ENCODE measurements at regions of chr18 and their contacts with region 1.

Region 1: DNA sequence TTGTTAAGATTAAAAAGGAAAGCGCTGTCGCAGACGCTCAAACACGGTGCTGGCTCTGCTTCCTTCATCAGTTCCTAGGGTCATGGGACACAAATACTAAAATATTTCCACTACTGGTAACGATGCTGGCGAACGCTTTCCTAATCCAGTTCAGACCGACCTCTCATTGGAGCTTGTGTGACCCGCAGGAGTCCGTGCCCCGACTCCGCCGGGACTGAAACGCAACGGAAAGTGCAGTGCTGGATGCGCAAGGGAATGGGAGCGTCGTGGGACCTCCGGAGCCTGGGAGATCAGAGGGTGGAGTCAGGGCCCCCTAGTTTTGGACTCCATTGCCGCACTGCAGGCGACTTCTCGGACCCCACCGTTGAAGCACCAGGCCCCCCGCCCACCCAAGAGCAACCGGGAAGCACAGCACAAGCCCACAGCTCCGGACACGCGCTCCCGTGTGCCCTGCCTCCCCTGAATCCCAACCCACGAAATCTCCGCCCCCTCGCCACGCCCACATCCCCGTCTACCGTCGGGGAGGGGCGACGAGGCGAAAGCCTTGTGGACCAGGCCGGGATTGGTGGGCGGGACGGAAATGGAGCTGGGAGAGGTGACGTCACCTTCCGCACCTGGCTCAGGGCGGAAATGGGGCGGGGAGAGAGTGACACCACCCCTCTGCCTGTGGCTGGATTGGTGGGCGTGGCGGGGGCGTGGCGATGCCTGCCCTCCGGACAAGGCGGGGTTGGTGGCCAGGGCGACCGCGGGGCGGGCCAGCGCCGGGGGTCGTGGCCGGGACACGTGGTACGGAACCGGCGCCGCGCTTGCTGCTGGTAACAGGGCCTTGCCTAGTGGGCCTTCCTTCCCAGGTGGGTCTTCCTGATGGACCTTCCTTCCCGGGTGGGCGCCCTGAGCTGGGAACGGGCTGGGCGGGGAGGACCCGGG is at the start of gene CNDP2:
- DNase-seq: peak; percentile 99
- ATAC-seq: peak; percentile 79
- H3K4me3 ChIP-seq: peak within 1 kb of the TSS; percentile 19 to 95 (median 81)
- H3K4me3 Mint-ChIP-seq: peak within 1 kb of the TSS; percentile 95
- H3K27ac ChIP-seq: peak within 1 kb of the TSS; percentile 85 to 91
- H3K27ac Mint-ChIP-seq: peak within 1 kb of the TSS; percentile 94
- H3K4me1 ChIP-seq: peaks cover 38% of the 10 kb centered on the region in 2 donors
- H3K4me1 Mint-ChIP-seq: peaks cover 43% of the 10 kb centered on the region
- H3K27me3 ChIP-seq: no peaks in the 10 kb centered on the region
- H3K27me3 Mint-ChIP-seq: no peaks in the 10 kb centered on the region
- CTCF ChIP-seq: no peak
- total RNA-seq, gene CNDP2: 182 and 196 TPM in 2 replicates

Region 2: GRCh38 chr18:74147779-74148542 is 347.9 kb before region 1 on chr18 and contains the starts of genes FBXO15 and TIMM21:
- CTCF ChIA-PET with region 1: no interaction called
- POLR2A ChIA-PET with region 1: no interaction called
- intact Hi-C with region 1: loop called (anchors 1 kb)
- DNase-seq: peak; percentile 98
- ATAC-seq: peak; percentile 84
- H3K4me3 ChIP-seq: peak within 1 kb of the TSS; percentile 75 to 99 (median 89)
- H3K4me3 Mint-ChIP-seq: peak within 1 kb of the TSS; percentile 94
- H3K27ac ChIP-seq: peak within 1 kb of the TSS; percentile 95 to 99
- H3K27ac Mint-ChIP-seq: peak within 1 kb of the TSS; percentile 100
- H3K4me1 ChIP-seq: peaks cover 15 to 21% of the 10 kb centered on the region in 2 donors
- H3K4me1 Mint-ChIP-seq: peaks cover 36% of the 10 kb centered on the region
- H3K27me3 ChIP-seq: no peaks in the 10 kb centered on the region
- H3K27me3 Mint-ChIP-seq: peaks cover 7% of the 10 kb centered on the region
- CTCF ChIP-seq: peak; percentile 1
- total RNA-seq, gene FBXO15: 3.7 and 4.1 TPM in 2 replicates
- total RNA-seq, gene TIMM21: 24.3 and 25.0 TPM in 2 replicates

Region 3: GRCh38 chr18:74353169-74353775 is 142.6 kb before region 1 on chr18:
- CTCF ChIA-PET with region 1: interaction called, 75 read pairs
- POLR2A ChIA-PET with region 1: interaction called, 9 read pairs
- intact Hi-C with region 1: loop called (anchors 1 kb)
- DNase-seq: peak; percentile 63
- ATAC-seq: peak; percentile 49
- H3K4me3 ChIP-seq: no peak overlapping the region
- H3K4me3 Mint-ChIP-seq: no peak overlapping the region
- H3K27ac ChIP-seq: no peak overlapping the region
- H3K27ac Mint-ChIP-seq: no peak overlapping the region
- H3K4me1 ChIP-seq: peaks cover 4 to 8% of the 10 kb centered on the region in 2 donors
- H3K4me1 Mint-ChIP-seq: peaks cover 11% of the 10 kb centered on the region
- H3K27me3 ChIP-seq: no peaks in the 10 kb centered on the region
- H3K27me3 Mint-ChIP-seq: no peaks in the 10 kb centered on the region
- CTCF ChIP-seq: peak; percentile 53

Region 4: GRCh38 chr18:74430811-74431571 is 64.9 kb before region 1 on chr18:
- CTCF ChIA-PET with region 1: no interaction called
- POLR2A ChIA-PET with region 1: no interaction called
- intact Hi-C with region 1: no loop called
- DNase-seq: no peak
- ATAC-seq: no peak
- H3K4me3 ChIP-seq: no peak overlapping the region
- H3K4me3 Mint-ChIP-seq: no peak overlapping the region
- H3K27ac ChIP-seq: no peak overlapping the region
- H3K27ac Mint-ChIP-seq: no peak overlapping the region
- H3K4me1 ChIP-seq: no peaks in the 10 kb centered on the region
- H3K4me1 Mint-ChIP-seq: no peaks in the 10 kb centered on the region
- H3K27me3 ChIP-seq: no peaks in the 10 kb centered on the region
- H3K27me3 Mint-ChIP-seq: peaks cover 7% of the 10 kb centered on the region
- CTCF ChIP-seq: no peak

Region 5: GRCh38 chr18:74579496-74580065 is 83.7 kb after region 1 on chr18:
- CTCF ChIA-PET with region 1: no interaction called
- POLR2A ChIA-PET with region 1: no interaction called
- intact Hi-C with region 1: no loop called
- DNase-seq: no peak
- ATAC-seq: no peak
- H3K4me3 ChIP-seq: no peak overlapping the region
- H3K4me3 Mint-ChIP-seq: no peak overlapping the region
- H3K27ac ChIP-seq: no peak overlapping the region
- H3K27ac Mint-ChIP-seq: no peak overlapping the region
- H3K4me1 ChIP-seq: no peaks in the 10 kb centered on the region
- H3K4me1 Mint-ChIP-seq: no peaks in the 10 kb centered on the region
- H3K27me3 ChIP-seq: peaks cover 0 to 9% (median 3%) of the 10 kb centered on the region in 4 experiments
- H3K27me3 Mint-ChIP-seq: peaks cover 35% of the 10 kb centered on the region
- CTCF ChIP-seq: no peak

Region 6: GRCh38 chr18:75209129-75209950 is 713.5 kb after region 1 on chr18 and contains the start of gene PTGR3:
- CTCF ChIA-PET with region 1: no interaction called
- POLR2A ChIA-PET with region 1: no interaction called
- intact Hi-C with region 1: loop called (anchors 5 kb)
- DNase-seq: peak; percentile 81
- ATAC-seq: peak; percentile 60
- H3K4me3 ChIP-seq: peak within 1 kb of the TSS; percentile 73 to 90 (median 84)
- H3K4me3 Mint-ChIP-seq: peak within 1 kb of the TSS; percentile 98
- H3K27ac ChIP-seq: peak within 1 kb of the TSS; percentile 51 to 80
- H3K27ac Mint-ChIP-seq: peak within 1 kb of the TSS; percentile 93
- H3K4me1 ChIP-seq: peaks cover 35 to 44% of the 10 kb centered on the region in 2 donors
- H3K4me1 Mint-ChIP-seq: peaks cover 59% of the 10 kb centered on the region
- H3K27me3 ChIP-seq: peaks cover 0 to 5% (median 2%) of the 10 kb centered on the region in 4 experiments
- H3K27me3 Mint-ChIP-seq: peaks cover 21% of the 10 kb centered on the region
- CTCF ChIP-seq: no peak
- total RNA-seq, gene PTGR3: 30.2 and 32.6 TPM in 2 replicates

Measured in B cell (primary cell).